Activated CD4-positive, alpha-beta memory T cell treated with anti-CD3 and anti-CD28 coated beads, Interleukin-2, amount 10 ng/mL, durations not matched to agents 7 days and 5 days (primary cell): ENCODE measurements at regions of chr3 and their contacts with region 1.

Region 1: DNA sequence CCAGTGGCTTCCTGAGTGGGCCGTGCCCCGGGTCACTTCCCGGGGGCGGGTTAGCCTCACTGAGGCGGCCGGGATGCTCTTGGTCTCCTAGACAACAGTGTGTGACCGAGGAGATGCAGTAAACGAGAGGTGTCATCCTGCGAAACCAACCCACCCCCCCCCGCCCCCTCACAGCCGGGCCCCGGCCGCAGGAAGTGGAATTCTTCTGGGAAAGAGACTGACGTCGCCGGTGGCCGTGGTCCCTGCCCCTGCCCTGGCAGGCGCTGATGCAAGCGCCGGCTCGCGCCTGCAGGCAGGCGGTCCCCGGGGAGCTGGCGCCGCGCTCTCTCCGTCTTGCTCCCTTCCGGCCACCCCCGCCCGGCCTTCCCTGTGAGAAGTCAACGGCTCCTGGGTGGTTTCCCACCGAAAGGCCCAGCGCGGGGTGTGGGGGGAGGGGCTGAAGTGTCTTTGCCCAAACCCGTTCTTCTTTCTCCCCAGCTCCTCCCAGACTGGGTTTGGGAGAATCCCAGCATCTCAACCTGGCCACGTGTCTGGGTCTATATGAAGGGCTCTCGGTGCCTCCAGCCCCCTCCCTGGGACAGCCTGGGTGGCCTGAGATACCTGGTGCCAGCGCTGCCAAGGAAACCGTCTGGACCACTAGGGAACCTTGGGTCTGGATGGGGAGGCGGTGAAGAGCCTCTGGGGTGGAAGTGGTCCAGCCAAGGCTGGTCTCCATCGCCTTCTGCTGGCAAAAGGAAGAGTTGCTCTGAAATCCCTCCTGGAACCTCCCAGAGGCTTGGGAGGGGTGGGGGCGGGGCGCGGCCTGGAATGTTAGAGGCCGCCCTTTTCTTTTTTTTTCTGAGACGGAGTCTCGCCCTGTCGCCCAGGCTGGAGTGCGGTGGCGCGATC is 47.3 kb downstream of the BHLHE40 start:
- DNase-seq: peak; percentile 69
- H3K4me3 Mint-ChIP-seq: peak overlapping the region; percentile 82
- H3K27ac Mint-ChIP-seq: peak overlapping the region; percentile 81
- H3K4me1 Mint-ChIP-seq: peaks cover 58% of the 10 kb centered on the region
- H3K27me3 Mint-ChIP-seq: no peaks in the 10 kb centered on the region

Region 2: GRCh38 chr3:4722103-4722502 is 304.5 kb before region 1 on chr3:
- CTCF ChIA-PET with region 1: interaction called, 20 read pairs
- POLR2A ChIA-PET with region 1: interaction called, 6 read pairs
- DNase-seq: peak; percentile 45
- H3K4me3 Mint-ChIP-seq: no peak overlapping the region
- H3K27ac Mint-ChIP-seq: peak overlapping the region; percentile 50
- H3K4me1 Mint-ChIP-seq: peaks cover 50% of the 10 kb centered on the region
- H3K27me3 Mint-ChIP-seq: no peaks in the 10 kb centered on the region

Region 3: DNA sequence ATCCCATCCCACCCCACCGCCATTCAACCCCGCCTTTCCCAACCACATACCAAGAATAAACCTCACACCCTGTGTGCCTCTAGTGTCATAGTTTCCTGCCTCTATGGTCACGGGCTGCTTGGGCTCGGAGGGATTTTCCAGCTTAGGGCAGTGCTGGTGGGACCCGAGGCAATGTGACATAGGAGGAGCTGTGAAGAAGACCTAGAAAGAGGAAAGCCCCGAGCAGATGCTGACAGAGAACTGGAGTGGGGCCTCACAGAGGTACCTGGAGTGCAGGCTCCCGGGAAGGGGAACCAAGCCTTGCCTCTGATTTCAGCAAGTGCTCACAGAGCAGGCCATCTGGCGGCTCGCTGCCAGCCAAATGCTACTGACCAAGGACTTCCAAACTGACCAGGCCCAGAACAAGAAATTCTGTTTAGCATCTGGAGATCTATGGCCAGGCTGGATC is 19.8 kb before region 1 on chr3:
- CTCF ChIA-PET with region 1: interaction called, 14 read pairs
- POLR2A ChIA-PET with region 1: interaction called, 12 read pairs
- DNase-seq: peak; percentile 83
- H3K4me3 Mint-ChIP-seq: peak overlapping the region; percentile 7
- H3K27ac Mint-ChIP-seq: peak overlapping the region; percentile 84
- H3K4me1 Mint-ChIP-seq: peaks cover 77% of the 10 kb centered on the region
- H3K27me3 Mint-ChIP-seq: no peaks in the 10 kb centered on the region